OCI-LY7 (cell line): ENCODE measurements at regions of chr18 and their contacts with region 1.

Region 1: GRCh38 chr18:58043491-58044379 is at the start of gene NEDD4L:
- DNase-seq: peak; percentile 71
- H3K4me3 ChIP-seq: peak within 1 kb of the TSS; percentile 78
- H3K27ac ChIP-seq: peak within 1 kb of the TSS; percentile 16
- H3K4me1 ChIP-seq: peaks cover 6% of the 10 kb centered on the region
- CTCF ChIP-seq: peak; percentile 76
- total RNA-seq, gene NEDD4L: 3.3 and 3.4 TPM in 2 replicates

Region 2: DNA sequence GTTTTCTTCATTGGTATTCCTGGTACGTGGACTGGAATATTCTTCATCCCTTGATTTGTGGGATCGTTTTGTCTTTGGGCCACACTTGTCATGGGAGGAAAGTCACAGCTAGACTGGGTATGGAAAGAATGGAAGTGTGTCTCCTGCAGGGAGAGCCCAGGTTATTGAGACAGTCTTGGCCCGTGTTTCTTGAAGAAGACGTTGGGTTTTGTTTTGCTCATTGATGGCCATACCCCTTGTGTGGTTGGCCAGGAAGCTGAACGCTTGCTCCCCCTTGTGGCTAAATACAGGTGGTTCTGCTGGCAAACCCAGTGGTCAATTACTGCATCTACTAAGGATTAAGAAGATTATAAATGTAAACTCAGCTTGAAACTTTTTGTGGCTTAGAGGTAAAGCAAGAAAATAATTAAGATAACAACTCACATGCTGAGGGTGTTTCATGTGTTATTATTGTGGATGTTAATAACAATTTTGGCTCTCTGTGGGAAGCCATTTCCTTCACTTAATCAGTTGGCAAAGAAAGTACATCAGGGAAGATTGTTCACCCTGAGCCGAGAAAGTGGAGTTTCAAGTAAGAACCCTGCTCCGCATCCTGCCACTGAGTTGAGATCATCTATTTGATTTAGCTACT is 92.1 kb after region 1 on chr18:
- CTCF ChIA-PET with region 1: interaction called, 3 read pairs
- POLR2A ChIA-PET with region 1: no interaction called
- intact Hi-C with region 1: loop called (anchors 5 kb)
- DNase-seq: peak; percentile 52
- H3K4me3 ChIP-seq: no peak overlapping the region
- H3K27ac ChIP-seq: no peak overlapping the region
- H3K4me1 ChIP-seq: no peaks in the 10 kb centered on the region
- CTCF ChIP-seq: peak; percentile 80

Region 3: DNA sequence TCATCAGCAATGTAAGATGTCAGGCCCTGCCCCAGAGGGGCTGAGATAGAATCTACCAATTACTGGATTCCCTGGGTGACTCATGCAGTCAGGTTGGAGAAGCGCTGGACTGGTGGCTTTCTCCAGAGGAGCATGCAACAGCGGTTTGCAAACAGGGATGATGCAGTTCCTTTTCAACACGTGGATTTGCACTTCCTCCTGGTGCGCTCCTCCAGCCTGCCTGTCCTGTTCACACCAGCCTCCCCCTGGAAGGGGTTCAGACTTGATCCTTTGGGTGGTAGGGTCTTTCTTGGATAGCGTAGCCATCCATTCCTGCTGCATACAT is 158.6 kb after region 1 on chr18:
- CTCF ChIA-PET with region 1: no interaction called
- POLR2A ChIA-PET with region 1: no interaction called
- intact Hi-C with region 1: no loop called
- DNase-seq: no peak
- H3K4me3 ChIP-seq: no peak overlapping the region
- H3K27ac ChIP-seq: no peak overlapping the region
- H3K4me1 ChIP-seq: no peaks in the 10 kb centered on the region
- CTCF ChIP-seq: no peak